Activated CD4-positive, alpha-beta T cell treated with anti-CD3 and anti-CD28 coated beads, Interleukin-2, amount 10 ng/mL, durations not matched to agents 24 days and 14 days (primary cell): ENCODE measurements at regions of chr17 and their contacts with region 1.

Region 1: DNA sequence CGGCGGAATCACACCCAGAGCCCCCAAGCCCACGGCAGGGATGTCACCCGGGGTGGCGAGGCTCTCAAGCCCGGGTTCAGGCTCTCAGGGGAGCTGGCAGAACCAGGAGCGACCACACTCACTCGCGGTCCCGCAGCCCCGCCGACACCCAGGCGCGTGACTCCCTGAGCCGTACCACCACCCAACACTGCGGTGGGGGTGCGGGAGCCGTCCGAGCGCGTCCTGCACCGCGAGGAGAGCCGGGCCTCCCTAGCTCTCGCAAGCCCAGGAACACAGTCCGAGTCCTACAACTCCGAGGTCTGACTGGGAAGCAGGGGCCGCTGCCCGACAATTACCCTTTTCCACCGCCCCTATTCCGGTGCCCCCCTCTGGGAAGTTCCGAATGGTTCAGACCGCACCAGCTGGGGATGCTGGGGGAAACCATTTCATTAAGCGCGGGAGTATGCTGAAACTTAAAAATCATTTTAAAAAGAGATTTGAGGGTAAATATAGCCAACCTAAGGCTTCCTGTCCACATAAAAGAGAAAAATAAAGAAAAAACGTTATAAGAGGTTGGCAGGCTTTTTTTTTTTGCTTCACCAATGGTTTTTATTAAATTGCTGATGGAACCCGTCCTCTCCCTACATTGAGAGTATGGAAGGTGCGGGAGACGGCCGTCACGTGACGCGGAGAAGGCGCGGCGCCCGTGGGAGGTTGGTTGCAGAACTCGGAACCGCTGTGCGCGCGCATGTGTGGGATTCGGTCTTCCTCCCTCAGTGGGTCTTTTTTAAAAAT is at the start of gene FLCN:
- DNase-seq: peak; percentile 96
- H3K4me3 Mint-ChIP-seq: peak within 1 kb of the TSS; percentile 91
- H3K27ac Mint-ChIP-seq: peak within 1 kb of the TSS; percentile 95
- H3K4me1 Mint-ChIP-seq: peaks cover 26% of the 10 kb centered on the region
- H3K27me3 Mint-ChIP-seq: peaks cover 2% of the 10 kb centered on the region
- total RNA-seq, gene FLCN: 34.1 and 34.7 TPM in 2 replicates

Region 2: DNA sequence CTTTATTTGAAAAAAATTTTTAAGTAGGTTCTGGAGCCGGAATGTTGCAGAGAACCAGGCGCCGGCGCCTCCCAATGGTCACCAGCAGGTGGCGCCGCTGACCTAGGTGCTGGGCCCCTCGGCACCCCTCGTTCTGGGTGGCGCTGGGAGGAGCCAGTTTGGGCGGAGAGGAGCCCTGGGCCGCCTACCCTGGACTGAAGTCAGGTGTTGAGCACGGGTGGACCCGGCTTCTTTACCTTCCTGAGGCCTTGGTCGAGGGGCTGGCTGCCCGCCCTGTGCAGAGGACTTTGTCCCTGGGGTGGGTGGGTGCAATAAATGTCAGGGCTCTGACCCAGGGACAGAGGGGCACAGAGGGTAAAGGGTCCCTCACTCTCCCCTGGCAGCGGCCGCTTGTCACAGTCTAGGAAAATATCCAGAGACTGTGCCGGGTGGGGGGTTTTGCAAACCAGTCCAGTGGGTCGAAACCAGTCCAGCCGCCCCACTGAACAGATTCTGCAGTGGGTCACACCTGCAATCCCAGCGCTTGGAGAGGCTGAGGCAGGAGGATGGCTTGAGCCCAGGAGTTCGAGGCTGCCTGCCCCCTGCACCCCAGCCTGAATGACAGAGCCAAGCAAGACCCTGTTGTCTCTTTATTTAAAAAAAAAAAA is 235.2 kb before region 1 on chr17:
- intact Hi-C with region 1: loop called (anchors 5 kb)
- DNase-seq: peak; percentile 94
- H3K4me3 Mint-ChIP-seq: no peak overlapping the region
- H3K27ac Mint-ChIP-seq: no peak overlapping the region
- H3K4me1 Mint-ChIP-seq: no peaks in the 10 kb centered on the region
- H3K27me3 Mint-ChIP-seq: peaks cover 2% of the 10 kb centered on the region

Region 3: GRCh38 chr17:17151962-17152361 is 85.3 kb before region 1 on chr17:
- intact Hi-C with region 1: loop called (anchors 1 kb)
- DNase-seq: no peak
- H3K4me3 Mint-ChIP-seq: no peak overlapping the region
- H3K27ac Mint-ChIP-seq: peak overlapping the region; percentile 85
- H3K4me1 Mint-ChIP-seq: peaks cover 42% of the 10 kb centered on the region
- H3K27me3 Mint-ChIP-seq: no peaks in the 10 kb centered on the region

Region 4: GRCh38 chr17:17179371-17179827 is 57.8 kb before region 1 on chr17:
- intact Hi-C with region 1: loop called (anchors 2 kb)
- DNase-seq: peak; percentile 83
- H3K4me3 Mint-ChIP-seq: peak overlapping the region; percentile 92
- H3K27ac Mint-ChIP-seq: peak overlapping the region; percentile 98
- H3K4me1 Mint-ChIP-seq: peaks cover 72% of the 10 kb centered on the region
- H3K27me3 Mint-ChIP-seq: no peaks in the 10 kb centered on the region

Region 5: GRCh38 chr17:17252149-17252661 is 15.0 kb after region 1 on chr17:
- intact Hi-C with region 1: no loop called
- DNase-seq: no peak
- H3K4me3 Mint-ChIP-seq: no peak overlapping the region
- H3K27ac Mint-ChIP-seq: no peak overlapping the region
- H3K4me1 Mint-ChIP-seq: no peaks in the 10 kb centered on the region
- H3K27me3 Mint-ChIP-seq: no peaks in the 10 kb centered on the region

Region 6: GRCh38 chr17:17280613-17281549 is 43.7 kb after region 1 on chr17 and contains the start of gene COPS3:
- intact Hi-C with region 1: loop called (anchors 2 kb)
- DNase-seq: peak; percentile 99
- H3K4me3 Mint-ChIP-seq: peak within 1 kb of the TSS; percentile 97
- H3K27ac Mint-ChIP-seq: peak within 1 kb of the TSS; percentile 93
- H3K4me1 Mint-ChIP-seq: peaks cover 33% of the 10 kb centered on the region
- H3K27me3 Mint-ChIP-seq: peaks cover 2% of the 10 kb centered on the region
- total RNA-seq, gene COPS3: 125 and 133 TPM in 2 replicates

Region 7: DNA sequence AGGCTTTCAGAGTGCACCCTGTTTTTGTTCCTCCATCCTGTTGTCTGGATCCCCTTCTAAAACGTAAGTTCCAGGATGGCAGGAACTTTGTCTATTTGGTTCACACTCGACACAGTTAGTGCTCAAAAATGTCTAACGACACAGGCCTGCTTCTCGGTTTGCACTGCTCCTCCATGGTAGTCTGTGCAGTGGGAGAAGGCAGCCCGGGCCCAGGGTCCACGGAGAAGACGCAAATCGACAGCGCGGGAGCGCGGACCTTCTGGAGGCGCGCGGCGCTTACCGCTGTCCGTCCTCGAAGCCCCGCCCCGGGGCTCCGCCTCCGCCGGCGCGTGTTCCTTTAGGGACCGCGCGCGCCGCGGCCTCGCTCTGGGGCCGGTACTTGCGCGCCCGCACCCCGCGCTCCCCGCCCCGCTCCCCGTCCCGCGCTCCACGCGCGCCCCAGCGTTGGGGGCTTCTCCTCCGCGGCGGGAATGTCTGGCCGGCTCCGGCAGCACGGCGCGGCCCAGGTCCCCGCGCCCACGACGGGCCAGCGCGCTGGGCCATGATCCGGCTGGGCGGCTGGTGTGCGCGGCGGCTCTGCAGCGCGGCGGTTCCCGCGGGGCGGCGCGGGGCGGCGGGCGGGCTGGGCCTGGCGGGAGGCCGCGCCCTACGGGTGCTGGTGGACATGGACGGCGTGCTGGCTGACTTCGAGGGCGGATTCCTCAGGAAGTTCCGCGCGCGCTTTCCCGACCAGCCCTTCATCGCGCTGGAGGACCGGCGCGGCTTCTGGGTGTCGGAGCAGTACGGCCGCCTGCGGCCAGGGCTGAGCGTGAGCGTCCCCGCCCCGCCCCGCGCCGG is 66.0 kb after region 1 on chr17 and contains the start of gene NT5M:
- intact Hi-C with region 1: loop called (anchors 1 kb)
- DNase-seq: peak; percentile 94
- H3K4me3 Mint-ChIP-seq: peak within 1 kb of the TSS; percentile 89
- H3K27ac Mint-ChIP-seq: peak within 1 kb of the TSS; percentile 92
- H3K4me1 Mint-ChIP-seq: peaks cover 30% of the 10 kb centered on the region
- H3K27me3 Mint-ChIP-seq: no peaks in the 10 kb centered on the region
- total RNA-seq, gene NT5M: 7.1 and 8.1 TPM in 2 replicates